Activated naive CD4-positive, alpha-beta T cell treated with anti-CD3 and anti-CD28 coated beads for 36 hours (primary cell): ENCODE measurements at regions of chr16 and their contacts with region 1.

Region 1: GRCh38 chr16:56425439-56425832 is at the start of gene AMFR:
- DNase-seq: peak; percentile 53
- H3K4me3 Mint-ChIP-seq: peak within 1 kb of the TSS; percentile 88
- H3K27ac Mint-ChIP-seq: peak within 1 kb of the TSS; percentile 34
- H3K4me1 Mint-ChIP-seq: peaks cover 29% of the 10 kb centered on the region
- H3K27me3 Mint-ChIP-seq: no peaks in the 10 kb centered on the region
- total RNA-seq, gene AMFR: 26.7 to 33.0 TPM

Region 2: GRCh38 chr16:56191156-56191815 is 234.2 kb before region 1 on chr16 and contains the start of gene GNAO1:
- CTCF ChIA-PET with region 1: no interaction called
- intact Hi-C with region 1: loop called (anchors 10 kb)
- DNase-seq: peak; percentile 41
- H3K4me3 Mint-ChIP-seq: peak within 1 kb of the TSS; percentile 72
- H3K27ac Mint-ChIP-seq: no peak within 1 kb of the TSS
- H3K4me1 Mint-ChIP-seq: peaks cover 23% of the 10 kb centered on the region
- H3K27me3 Mint-ChIP-seq: peaks cover 70% of the 10 kb centered on the region
- total RNA-seq, gene GNAO1: 0.25 to 0.50 TPM

Region 3: GRCh38 chr16:56356276-56357240 is 68.9 kb before region 1 on chr16:
- CTCF ChIA-PET with region 1: no interaction called
- intact Hi-C with region 1: loop called (anchors 2 kb)
- DNase-seq: peak; percentile 68
- H3K4me3 Mint-ChIP-seq: peak overlapping the region; percentile 74
- H3K27ac Mint-ChIP-seq: peak overlapping the region; percentile 86
- H3K4me1 Mint-ChIP-seq: peaks cover 31% of the 10 kb centered on the region
- H3K27me3 Mint-ChIP-seq: no peaks in the 10 kb centered on the region

Region 4: GRCh38 chr16:56475201-56475600 is 49.8 kb after region 1 on chr16:
- CTCF ChIA-PET with region 1: no interaction called
- intact Hi-C with region 1: no loop called
- DNase-seq: no peak
- H3K4me3 Mint-ChIP-seq: no peak overlapping the region
- H3K27ac Mint-ChIP-seq: no peak overlapping the region
- H3K4me1 Mint-ChIP-seq: peaks cover 25% of the 10 kb centered on the region
- H3K27me3 Mint-ChIP-seq: no peaks in the 10 kb centered on the region